ENCODE measurements at regions of chr12 and their contacts with region 1.

Region 1: DNA sequence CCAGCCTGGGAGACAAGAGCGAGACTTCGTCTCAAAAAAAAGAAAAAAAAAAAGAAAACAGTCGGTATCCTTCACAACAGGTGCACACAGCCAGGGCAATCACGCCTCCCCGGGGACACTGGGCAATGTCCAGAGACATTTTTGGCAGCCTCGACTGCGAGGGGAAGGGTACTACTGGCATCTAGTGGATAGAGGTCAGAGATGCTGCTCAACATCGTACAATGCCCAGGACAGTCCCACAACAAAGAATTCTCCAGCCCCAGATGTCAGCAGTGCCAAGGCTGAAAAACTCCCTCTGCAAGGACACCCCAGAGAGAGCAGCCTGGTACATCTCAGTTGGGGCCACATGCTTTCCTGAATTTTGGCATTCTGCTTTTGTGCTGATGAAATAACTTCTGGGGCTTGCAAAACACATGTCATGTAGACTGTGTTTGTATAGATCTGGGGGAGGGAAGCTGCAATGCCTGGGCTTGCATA is 21.5 kb downstream of the ALDH2 start:
- DNase-seq: no peak
- ATAC-seq: peak; percentile 98
- H3K4me3 ChIP-seq: no peak overlapping the region
- H3K27ac ChIP-seq: no peak overlapping the region
- H3K4me1 ChIP-seq: no peaks in the 10 kb centered on the region
- H3K27me3 ChIP-seq: no peaks in the 10 kb centered on the region
- CTCF ChIP-seq: peak; percentile 57 to 83 (median 69)
- EP300 ChIP-seq: no peak
- POLR2A ChIP-seq: no peak
- RAD21 ChIP-seq: peak; percentile 79

Region 2: DNA sequence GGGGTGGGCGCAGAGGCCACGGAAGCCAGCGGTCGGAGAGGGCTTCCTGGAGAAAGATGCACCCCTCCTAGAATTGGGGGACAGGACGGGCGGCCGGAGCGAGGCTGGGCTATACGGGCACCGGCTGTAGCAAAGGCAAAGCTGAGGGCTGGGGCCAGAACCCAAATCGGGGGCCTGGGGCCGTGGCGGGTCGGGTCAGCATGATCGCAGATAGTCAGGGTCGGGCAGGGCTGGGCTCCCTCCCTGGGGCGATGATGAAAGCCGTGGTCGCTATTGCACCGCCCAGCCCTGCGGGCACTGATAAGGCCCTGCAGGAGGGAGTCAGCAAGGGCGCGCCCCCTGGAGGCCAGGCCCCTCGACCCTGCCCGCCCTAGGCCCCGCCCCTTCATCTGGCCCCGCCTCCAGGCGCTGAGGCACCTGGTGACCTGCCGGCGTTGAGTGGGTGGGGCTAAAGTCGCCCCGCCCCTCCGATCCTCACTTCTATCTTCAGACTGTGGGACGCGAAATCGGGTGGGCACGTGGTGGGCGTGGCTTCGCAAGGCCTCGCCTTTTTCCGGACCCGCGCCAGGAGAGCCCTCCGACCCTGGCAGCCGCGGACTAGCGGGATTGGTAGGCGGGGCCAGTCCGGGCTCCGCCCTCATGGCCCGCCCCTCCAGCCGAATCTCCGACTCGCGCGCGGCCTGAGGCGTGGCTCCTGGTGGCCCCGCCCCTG is 382.9 kb before region 1 on chr12:
- CTCF ChIA-PET with region 1: no interaction called
- POLR2A ChIA-PET with region 1: no interaction called
- RAD21 ChIA-PET with region 1: no interaction called
- SMC1A ChIA-PET with region 1: no interaction called
- in situ Hi-C with region 1: no loop called
- intact Hi-C with region 1: no loop called
- DNase-seq: peak; percentile 86
- ATAC-seq: peak; percentile 70
- H3K4me3 ChIP-seq: peak overlapping the region; percentile 86
- H3K27ac ChIP-seq: peak overlapping the region; percentile 91
- H3K4me1 ChIP-seq: peaks cover 49% of the 10 kb centered on the region
- H3K27me3 ChIP-seq: no peaks in the 10 kb centered on the region
- CTCF ChIP-seq: peak; percentile 60 to 70 (median 64); a peak in 5 of 6 replicates
- EP300 ChIP-seq: no peak
- POLR2A ChIP-seq: peak; percentile 85
- RAD21 ChIP-seq: no peak

Region 3: DNA sequence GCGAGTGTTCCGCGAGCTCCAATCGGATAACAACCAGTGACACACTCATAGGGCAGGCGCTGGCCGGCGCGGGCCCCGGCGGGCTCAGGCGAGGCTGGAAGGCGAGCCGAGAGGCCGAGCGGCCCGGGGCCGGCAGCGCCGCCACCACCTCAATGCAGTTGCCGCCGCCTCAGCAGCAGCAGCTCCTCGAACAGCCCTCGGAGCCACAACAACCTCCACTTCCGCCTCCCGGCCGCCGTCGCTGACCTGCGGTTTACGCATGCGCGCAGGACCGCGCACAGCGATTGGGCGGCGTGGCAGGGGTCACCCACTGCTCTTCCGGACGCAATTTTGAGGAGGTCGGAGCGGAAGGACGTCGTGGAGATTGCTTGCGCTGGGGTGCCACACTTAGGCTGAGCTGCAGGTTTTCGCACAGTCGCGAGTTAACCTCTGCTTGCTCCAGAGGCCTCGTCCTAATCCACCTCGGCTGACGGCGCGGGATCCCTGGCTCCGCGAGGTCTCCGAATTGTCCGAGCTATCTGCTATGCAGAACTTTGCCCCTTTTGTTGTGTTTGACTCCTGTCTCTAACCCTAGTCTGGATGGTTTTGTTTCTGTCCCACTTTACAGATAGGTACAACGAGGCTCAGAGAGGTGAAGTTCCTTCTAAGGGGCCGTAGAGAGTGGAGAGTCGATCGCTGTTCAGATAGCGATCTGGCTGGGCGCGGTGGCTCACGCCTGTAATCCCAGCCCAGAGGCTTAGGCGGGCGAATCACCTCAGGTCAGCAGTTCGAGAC is 102.3 kb before region 1 on chr12 and contains the starts of genes ACAD10 and BRAP:
- CTCF ChIA-PET with region 1: interaction called, 3 read pairs
- POLR2A ChIA-PET with region 1: interaction called, 5 read pairs
- RAD21 ChIA-PET with region 1: no interaction called
- SMC1A ChIA-PET with region 1: no interaction called
- in situ Hi-C with region 1: no loop called
- intact Hi-C with region 1: loop called (anchors 1 kb)
- DNase-seq: peak; percentile 89
- ATAC-seq: peak; percentile 98
- H3K4me3 ChIP-seq: peak within 1 kb of the TSS; percentile 99
- H3K27ac ChIP-seq: peak within 1 kb of the TSS; percentile 63
- H3K4me1 ChIP-seq: peaks cover 8% of the 10 kb centered on the region
- H3K27me3 ChIP-seq: no peaks in the 10 kb centered on the region
- CTCF ChIP-seq: peak in 2 of 3 experiments; percentile 8 to 13; a peak in 1 of 6 replicates
- EP300 ChIP-seq: no peak
- POLR2A ChIP-seq: peak; percentile 99
- RAD21 ChIP-seq: no peak
- polyA plus RNA-seq, gene ACAD10: 2.9 to 3.4 TPM
- polyA plus RNA-seq, gene BRAP: 2.3 to 3.4 TPM

Region 4: DNA sequence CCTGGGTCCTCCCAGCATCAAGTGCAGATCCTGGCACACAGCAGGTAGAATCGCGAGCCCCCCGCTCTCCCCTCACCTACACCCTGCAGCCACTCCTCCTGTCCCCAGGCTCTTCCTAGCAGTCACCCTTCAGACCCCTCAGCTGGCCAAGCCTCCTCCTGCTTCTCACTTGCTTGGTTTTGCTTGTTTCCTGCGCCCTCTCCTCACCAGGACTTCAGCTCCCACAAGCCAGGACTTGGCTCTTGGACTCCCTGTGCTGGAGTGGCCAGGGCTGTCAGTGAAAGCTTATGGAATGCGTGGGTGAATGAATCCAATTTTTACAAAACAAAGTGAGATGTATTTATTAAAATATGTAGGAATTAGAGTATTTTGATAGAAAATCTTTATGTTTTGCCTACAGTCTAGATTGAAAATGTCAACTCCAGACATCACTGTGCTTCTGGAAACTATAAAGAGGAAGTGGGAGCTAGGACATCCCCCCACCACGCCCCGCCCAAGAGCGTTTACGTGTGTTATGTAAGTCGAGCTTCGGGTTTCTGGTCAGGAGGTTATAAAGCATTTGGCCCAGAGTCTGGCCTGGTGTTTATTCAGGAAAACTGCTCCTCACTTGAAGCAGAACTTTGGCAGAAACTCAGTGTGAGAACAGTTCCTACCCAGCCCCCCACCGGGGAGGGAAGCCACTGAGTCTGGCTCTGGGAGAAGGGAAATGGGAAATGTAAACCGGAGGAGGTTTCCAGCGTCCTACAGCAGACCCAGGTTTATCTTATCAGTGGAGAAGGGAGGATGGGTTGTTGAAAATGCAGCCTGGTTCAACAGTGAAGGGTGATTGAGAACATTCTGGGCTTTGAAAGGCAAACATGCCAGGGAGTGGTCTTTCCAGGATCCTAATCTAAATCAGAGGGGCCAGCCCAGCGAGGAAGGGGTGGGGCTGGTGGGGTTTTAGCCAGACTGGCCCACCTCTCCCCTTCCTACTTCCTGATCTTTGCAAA is 12.7 kb before region 1 on chr12:
- CTCF ChIA-PET with region 1: interaction called, 16 read pairs
- POLR2A ChIA-PET with region 1: no interaction called
- RAD21 ChIA-PET with region 1: no interaction called
- SMC1A ChIA-PET with region 1: interaction called, 7 read pairs
- in situ Hi-C with region 1: no loop called
- intact Hi-C with region 1: no loop called
- DNase-seq: peak; percentile 70
- ATAC-seq: peak; percentile 91
- H3K4me3 ChIP-seq: peak overlapping the region; percentile 57; the same call in 1 of the 2 replicates
- H3K27ac ChIP-seq: peak overlapping the region; percentile 86
- H3K4me1 ChIP-seq: peaks cover 34% of the 10 kb centered on the region
- H3K27me3 ChIP-seq: no peaks in the 10 kb centered on the region
- CTCF ChIP-seq: no peak
- EP300 ChIP-seq: peak; percentile 53 to 83
- POLR2A ChIP-seq: peak; percentile 62
- RAD21 ChIP-seq: no peak

Measured in GM12878 (cell line).